ENCODE measurements at regions of chr3 and their contacts with region 1.

Region 1: DNA sequence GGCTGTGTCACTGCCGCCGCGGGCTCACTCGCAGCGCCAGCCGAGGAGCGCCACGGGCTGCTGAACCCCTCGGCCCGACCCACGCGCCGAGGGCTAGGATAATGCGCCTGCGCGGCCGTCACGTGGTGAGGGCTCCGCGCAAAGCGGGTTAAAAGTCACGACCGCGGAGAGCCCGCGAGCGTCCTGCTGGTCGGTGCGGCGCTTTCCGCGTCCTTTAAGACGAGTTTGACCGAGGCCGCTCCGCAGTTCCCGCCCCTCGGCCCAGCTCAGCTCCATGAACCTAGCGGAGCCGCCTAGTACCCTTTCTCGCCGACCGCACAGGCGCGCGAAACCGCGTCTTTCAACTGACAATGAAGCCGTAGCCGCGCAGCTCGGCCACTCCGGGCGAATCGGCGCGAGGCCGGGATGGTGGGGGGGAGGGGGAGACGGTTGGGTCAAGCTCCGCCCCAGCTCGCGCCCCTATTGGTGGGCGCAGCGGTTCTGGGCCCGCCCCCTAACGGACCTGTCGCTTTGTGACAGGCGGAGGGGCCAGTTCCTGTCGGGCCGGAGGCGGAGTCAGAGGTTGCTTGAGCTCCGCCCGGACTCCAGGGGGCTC is 636 bp upstream of the STT3B start:
- DNase-seq: peak; percentile 98
- H3K4me3 Mint-ChIP-seq: no peak overlapping the region
- H3K27ac Mint-ChIP-seq: peak overlapping the region; percentile 99
- H3K4me1 Mint-ChIP-seq: peaks cover 21% of the 10 kb centered on the region
- H3K27me3 Mint-ChIP-seq: no peaks in the 10 kb centered on the region

Region 2: DNA sequence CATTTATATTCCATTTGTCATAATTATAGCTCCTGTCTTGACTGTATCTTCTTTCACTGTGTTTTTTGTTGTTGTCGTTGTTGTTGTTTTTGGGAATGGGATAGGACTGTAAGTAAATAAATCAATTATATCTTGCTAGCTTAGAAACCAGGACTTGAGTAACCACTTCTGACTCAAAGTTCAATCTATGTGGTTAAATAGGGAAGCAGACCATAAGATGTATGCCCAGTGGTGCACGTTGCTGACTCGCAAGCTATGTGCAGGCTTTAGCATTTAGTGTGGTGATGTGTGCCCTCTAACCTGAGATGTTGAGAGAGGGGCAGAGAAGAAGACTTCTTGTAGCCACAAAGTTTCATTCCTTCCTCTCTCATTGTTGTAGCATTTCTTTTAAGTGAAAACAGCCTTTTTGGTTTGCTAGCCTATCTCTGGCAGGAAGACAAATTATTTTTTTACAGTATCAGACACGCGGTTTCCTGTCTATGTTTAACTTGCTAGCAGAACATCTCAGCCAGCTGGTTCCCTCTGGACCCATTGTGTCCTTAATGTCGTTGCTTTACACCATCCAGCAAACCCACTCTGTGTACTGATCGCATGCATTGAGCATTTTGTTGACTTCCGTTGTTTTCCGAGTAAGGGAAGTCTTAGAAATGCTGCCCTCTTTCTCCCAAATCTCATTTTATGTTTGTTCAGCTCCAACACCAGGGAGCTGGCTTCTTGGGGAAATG is 873.6 kb before region 1 on chr3:
- intact Hi-C with region 1: loop called (anchors 5 kb)
- DNase-seq: no peak
- H3K4me3 Mint-ChIP-seq: peak overlapping the region; percentile 85
- H3K27ac Mint-ChIP-seq: peak overlapping the region; percentile 96
- H3K4me1 Mint-ChIP-seq: peaks cover 97% of the 10 kb centered on the region
- H3K27me3 Mint-ChIP-seq: no peaks in the 10 kb centered on the region

Region 3: DNA sequence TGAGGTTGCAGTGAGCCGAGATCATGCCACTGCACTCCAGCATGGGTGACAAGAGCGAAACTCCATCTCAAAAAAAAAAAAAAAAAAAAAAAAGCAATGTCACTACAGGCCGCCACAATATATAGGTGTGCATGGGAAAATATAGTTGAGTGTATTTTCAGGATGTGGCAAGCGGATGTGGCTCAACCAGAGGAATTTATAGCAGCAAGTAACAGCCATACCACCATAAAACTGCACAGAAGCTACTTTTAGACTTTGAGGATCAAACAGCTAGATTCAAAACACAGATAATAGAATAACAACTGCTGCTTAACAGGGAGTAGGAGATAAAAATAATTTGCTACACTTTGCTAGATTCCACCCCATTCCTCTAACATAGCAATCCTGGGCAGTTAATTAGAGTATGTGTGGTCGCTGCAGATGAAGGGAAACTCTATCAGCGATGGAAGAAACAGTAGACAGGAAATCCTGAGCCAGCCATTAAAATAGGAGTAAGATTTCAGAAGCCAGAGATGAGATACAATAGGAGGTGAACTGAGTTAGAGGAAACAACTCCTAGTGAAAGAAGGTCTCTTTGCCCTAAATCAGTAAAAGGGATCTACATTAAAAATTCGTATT is 318.1 kb before region 1 on chr3:
- intact Hi-C with region 1: loop called (anchors 1 kb)
- DNase-seq: peak; percentile 53
- H3K4me3 Mint-ChIP-seq: peak overlapping the region; percentile 43
- H3K27ac Mint-ChIP-seq: peak overlapping the region; percentile 81
- H3K4me1 Mint-ChIP-seq: peaks cover 94% of the 10 kb centered on the region
- H3K27me3 Mint-ChIP-seq: no peaks in the 10 kb centered on the region

Region 4: GRCh38 chr3:31448035-31448881 is 83.8 kb before region 1 on chr3:
- intact Hi-C with region 1: loop called (anchors 1 kb)
- DNase-seq: peak; percentile 4
- H3K4me3 Mint-ChIP-seq: no peak overlapping the region
- H3K27ac Mint-ChIP-seq: peak overlapping the region; percentile 13
- H3K4me1 Mint-ChIP-seq: peaks cover 30% of the 10 kb centered on the region
- H3K27me3 Mint-ChIP-seq: peaks cover 3% of the 10 kb centered on the region

Region 5: GRCh38 chr3:31754575-31755278 is 222.6 kb after region 1 on chr3:
- intact Hi-C with region 1: loop called (anchors 1 kb)
- DNase-seq: no peak
- H3K4me3 Mint-ChIP-seq: peak overlapping the region; percentile 66
- H3K27ac Mint-ChIP-seq: peak overlapping the region; percentile 94
- H3K4me1 Mint-ChIP-seq: peaks cover 61% of the 10 kb centered on the region
- H3K27me3 Mint-ChIP-seq: no peaks in the 10 kb centered on the region

Region 6: GRCh38 chr3:32106280-32106928 is 574.3 kb after region 1 on chr3 and contains the start of gene GPD1L:
- intact Hi-C with region 1: loop called (anchors 2 kb)
- DNase-seq: peak; percentile 93
- H3K4me3 Mint-ChIP-seq: peak within 1 kb of the TSS; percentile 97
- H3K27ac Mint-ChIP-seq: peak within 1 kb of the TSS; percentile 89
- H3K4me1 Mint-ChIP-seq: peaks cover 28% of the 10 kb centered on the region
- H3K27me3 Mint-ChIP-seq: no peaks in the 10 kb centered on the region
- total RNA-seq, gene GPD1L: 16.3 and 16.6 TPM in 2 replicates

Measured in activated T-helper 1 cell treated with anti-CD3 and anti-CD28 coated beads, Interleukin-12 subunit alpha, Interleukin-12 subunit beta, Interleukin-2, Interleukin-4 antibody, amounts not matched to agents 30 ng/mL and 10 ng/mL and 1 ng/mL, durations not matched to agents 14 hours and 24 hours and 36 hours (primary cell).